ENCODE measurements at regions of chr3 and their contacts with region 1.

Region 1: GRCh38 chr3:30693470-30694120 is 87.2 kb downstream of the TGFBR2 start:
- DNase-seq: peak in 6 of 9 experiments; percentile 42 to 85 (median 61)
- ATAC-seq: peak; percentile 89
- H3K4me3 ChIP-seq: no peak overlapping the region
- H3K4me3 Mint-ChIP-seq: no peak overlapping the region
- H3K27ac ChIP-seq: peak overlapping the region in 1 of 2 experiments; percentile 4
- H3K27ac Mint-ChIP-seq: peak overlapping the region; percentile 72
- H3K4me1 ChIP-seq: peaks cover 57% of the 10 kb centered on the region
- H3K4me1 Mint-ChIP-seq: peaks cover 88% of the 10 kb centered on the region
- H3K27me3 ChIP-seq: no peaks in the 10 kb centered on the region
- H3K27me3 Mint-ChIP-seq: no peaks in the 10 kb centered on the region
- CTCF ChIP-seq: peak; percentile 87

Region 2: GRCh38 chr3:30042274-30042859 is 651.2 kb before region 1 on chr3:
- CTCF ChIA-PET with region 1: interaction called, 28 read pairs
- POLR2A ChIA-PET with region 1: no interaction called
- intact Hi-C with region 1: loop called (anchors 1 kb)
- DNase-seq: peak; percentile 10 to 74 (median 62)
- ATAC-seq: peak; percentile 40
- H3K4me3 ChIP-seq: no peak overlapping the region
- H3K4me3 Mint-ChIP-seq: no peak overlapping the region
- H3K27ac ChIP-seq: no peak overlapping the region
- H3K27ac Mint-ChIP-seq: no peak overlapping the region
- H3K4me1 ChIP-seq: no peaks in the 10 kb centered on the region
- H3K4me1 Mint-ChIP-seq: no peaks in the 10 kb centered on the region
- H3K27me3 ChIP-seq: peaks cover 0 to 2% of the 10 kb centered on the region in 2 experiments
- H3K27me3 Mint-ChIP-seq: peaks cover 27% of the 10 kb centered on the region
- CTCF ChIP-seq: peak; percentile 75

Region 3: DNA sequence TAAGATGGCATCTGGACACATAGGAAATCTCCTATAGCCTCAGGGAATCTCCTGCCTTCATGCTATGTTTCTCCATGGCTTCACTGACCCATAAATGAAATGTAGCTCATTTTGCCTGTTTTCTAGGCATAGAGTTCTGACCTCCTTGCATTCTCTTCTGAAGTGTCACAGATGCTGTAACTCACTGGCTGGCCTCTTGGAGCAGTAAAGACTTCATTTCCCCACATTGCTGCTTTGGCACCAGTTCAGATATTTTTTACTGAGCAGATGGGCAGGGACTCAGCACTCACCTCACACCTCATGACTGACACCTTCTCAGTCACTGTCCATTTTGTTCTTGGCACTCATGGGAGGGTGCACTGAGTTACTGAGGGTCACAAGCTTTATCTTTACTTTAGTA is 373.9 kb before region 1 on chr3:
- CTCF ChIA-PET with region 1: interaction called, 22 read pairs
- POLR2A ChIA-PET with region 1: interaction called, 8 read pairs
- intact Hi-C with region 1: loop called (anchors 1 to 2 kb)
- DNase-seq: peak in 8 of 9 experiments; percentile 4 to 76 (median 44)
- ATAC-seq: peak; percentile 98
- H3K4me3 ChIP-seq: no peak overlapping the region
- H3K4me3 Mint-ChIP-seq: no peak overlapping the region
- H3K27ac ChIP-seq: no peak overlapping the region
- H3K27ac Mint-ChIP-seq: peak overlapping the region; percentile 37
- H3K4me1 ChIP-seq: peaks cover 9% of the 10 kb centered on the region
- H3K4me1 Mint-ChIP-seq: peaks cover 18% of the 10 kb centered on the region
- H3K27me3 ChIP-seq: no peaks in the 10 kb centered on the region
- H3K27me3 Mint-ChIP-seq: no peaks in the 10 kb centered on the region
- CTCF ChIP-seq: peak; percentile 61

Region 4: GRCh38 chr3:30606301-30607031 is 87.1 kb before region 1 on chr3 and contains the start of gene TGFBR2:
- CTCF ChIA-PET with region 1: interaction called, 17 read pairs
- POLR2A ChIA-PET with region 1: interaction called, 6 read pairs
- intact Hi-C with region 1: loop called (anchors 2 to 5 kb)
- DNase-seq: peak; percentile 59 to 92 (median 85)
- ATAC-seq: peak; percentile 70
- H3K4me3 ChIP-seq: peak within 1 kb of the TSS; percentile 94 to 96
- H3K4me3 Mint-ChIP-seq: peak within 1 kb of the TSS; percentile 94
- H3K27ac ChIP-seq: peak within 1 kb of the TSS; percentile 83 to 94
- H3K27ac Mint-ChIP-seq: peak within 1 kb of the TSS; percentile 98
- H3K4me1 ChIP-seq: peaks cover 48% of the 10 kb centered on the region
- H3K4me1 Mint-ChIP-seq: peaks cover 59% of the 10 kb centered on the region
- H3K27me3 ChIP-seq: no peaks in the 10 kb centered on the region
- H3K27me3 Mint-ChIP-seq: no peaks in the 10 kb centered on the region
- CTCF ChIP-seq: no peak
- total RNA-seq, gene TGFBR2: 191 to 197 TPM

Region 5: DNA sequence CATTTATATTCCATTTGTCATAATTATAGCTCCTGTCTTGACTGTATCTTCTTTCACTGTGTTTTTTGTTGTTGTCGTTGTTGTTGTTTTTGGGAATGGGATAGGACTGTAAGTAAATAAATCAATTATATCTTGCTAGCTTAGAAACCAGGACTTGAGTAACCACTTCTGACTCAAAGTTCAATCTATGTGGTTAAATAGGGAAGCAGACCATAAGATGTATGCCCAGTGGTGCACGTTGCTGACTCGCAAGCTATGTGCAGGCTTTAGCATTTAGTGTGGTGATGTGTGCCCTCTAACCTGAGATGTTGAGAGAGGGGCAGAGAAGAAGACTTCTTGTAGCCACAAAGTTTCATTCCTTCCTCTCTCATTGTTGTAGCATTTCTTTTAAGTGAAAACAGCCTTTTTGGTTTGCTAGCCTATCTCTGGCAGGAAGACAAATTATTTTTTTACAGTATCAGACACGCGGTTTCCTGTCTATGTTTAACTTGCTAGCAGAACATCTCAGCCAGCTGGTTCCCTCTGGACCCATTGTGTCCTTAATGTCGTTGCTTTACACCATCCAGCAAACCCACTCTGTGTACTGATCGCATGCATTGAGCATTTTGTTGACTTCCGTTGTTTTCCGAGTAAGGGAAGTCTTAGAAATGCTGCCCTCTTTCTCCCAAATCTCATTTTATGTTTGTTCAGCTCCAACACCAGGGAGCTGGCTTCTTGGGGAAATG is 35.1 kb before region 1 on chr3:
- CTCF ChIA-PET with region 1: interaction called, 22 read pairs
- POLR2A ChIA-PET with region 1: interaction called, 12 read pairs
- intact Hi-C with region 1: loop called in 1 of 2 experiments (anchors 2 kb)
- DNase-seq: peak in 7 of 9 experiments; percentile 31 to 85 (median 70)
- ATAC-seq: peak; percentile 54
- H3K4me3 ChIP-seq: peak overlapping the region in 1 of 2 experiments; percentile 3
- H3K4me3 Mint-ChIP-seq: peak overlapping the region; percentile 70
- H3K27ac ChIP-seq: peak overlapping the region; percentile 78 to 83
- H3K27ac Mint-ChIP-seq: peak overlapping the region; percentile 98
- H3K4me1 ChIP-seq: peaks cover 99% of the 10 kb centered on the region
- H3K4me1 Mint-ChIP-seq: peaks cover 99% of the 10 kb centered on the region
- H3K27me3 ChIP-seq: no peaks in the 10 kb centered on the region
- H3K27me3 Mint-ChIP-seq: no peaks in the 10 kb centered on the region
- CTCF ChIP-seq: no peak

Region 6: DNA sequence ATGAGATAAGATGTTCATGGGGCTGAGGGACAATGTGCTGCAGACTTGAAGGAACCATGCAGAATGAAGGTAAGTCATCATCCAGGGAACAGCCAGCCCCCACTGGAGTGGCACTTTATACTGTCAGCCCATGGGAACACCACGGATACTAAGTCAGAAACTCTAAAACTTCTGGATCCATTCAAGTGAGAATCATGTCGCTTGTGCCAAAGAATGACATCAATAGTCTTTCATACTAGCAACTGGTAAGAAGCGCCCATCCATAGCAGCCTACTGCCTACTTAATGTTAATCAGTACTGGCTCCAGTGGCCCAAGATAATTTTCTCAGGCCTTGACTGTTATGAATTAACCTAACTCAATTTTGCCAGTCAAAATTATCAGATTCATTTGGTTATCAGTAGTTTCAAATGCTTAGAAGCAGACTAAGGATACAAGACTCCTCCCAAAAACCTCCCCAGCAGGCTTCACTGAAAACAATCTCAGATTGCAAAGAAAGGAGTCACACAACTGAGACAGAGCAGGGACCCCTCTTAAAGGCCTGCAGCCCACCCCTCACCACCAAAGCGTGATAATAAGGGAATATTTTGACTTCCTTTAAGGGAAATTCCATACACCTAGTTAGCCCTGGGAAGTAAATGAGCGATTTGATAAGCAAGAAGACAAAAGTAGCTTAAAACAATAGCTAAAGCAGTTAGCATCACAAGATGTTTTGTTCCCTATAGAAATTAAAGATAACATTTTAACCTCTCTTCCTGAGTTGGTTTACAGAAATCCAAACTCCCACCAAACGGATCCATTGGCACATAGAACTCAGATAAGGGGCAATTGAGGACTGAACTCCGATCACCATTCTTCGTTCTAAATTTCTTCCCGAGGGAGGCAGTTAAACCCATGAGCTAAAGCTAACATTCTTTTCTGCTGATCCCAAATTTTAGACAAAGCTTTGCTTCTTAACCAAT is 11.6 kb after region 1 on chr3:
- CTCF ChIA-PET with region 1: interaction called, 23 read pairs
- POLR2A ChIA-PET with region 1: interaction called, 3 read pairs
- intact Hi-C with region 1: no loop called
- DNase-seq: no peak
- ATAC-seq: no peak
- H3K4me3 ChIP-seq: no peak overlapping the region
- H3K4me3 Mint-ChIP-seq: no peak overlapping the region
- H3K27ac ChIP-seq: no peak overlapping the region
- H3K27ac Mint-ChIP-seq: peak overlapping the region; percentile 43
- H3K4me1 ChIP-seq: peaks cover 20% of the 10 kb centered on the region
- H3K4me1 Mint-ChIP-seq: peaks cover 50% of the 10 kb centered on the region
- H3K27me3 ChIP-seq: no peaks in the 10 kb centered on the region
- H3K27me3 Mint-ChIP-seq: no peaks in the 10 kb centered on the region
- CTCF ChIP-seq: no peak

Region 7: DNA sequence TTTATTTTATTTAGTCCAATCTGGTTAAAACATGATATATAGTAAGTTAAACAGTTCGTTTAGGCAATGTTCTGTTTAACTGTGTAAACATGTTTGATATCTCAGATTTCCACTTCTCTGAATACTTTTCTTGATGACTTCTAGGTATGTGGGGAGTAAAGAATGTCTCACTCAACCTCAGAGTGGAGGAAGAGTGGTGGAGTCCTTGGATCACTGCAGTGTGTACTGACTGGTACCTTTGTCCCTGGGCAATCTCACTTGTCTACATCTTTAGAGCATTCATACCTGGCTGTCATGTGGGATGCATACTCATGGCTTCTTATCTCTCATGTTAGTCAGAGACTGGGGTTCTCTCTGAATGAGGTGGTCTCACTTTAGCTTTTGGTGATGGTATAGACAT is 185.3 kb after region 1 on chr3:
- CTCF ChIA-PET with region 1: no interaction called
- POLR2A ChIA-PET with region 1: no interaction called
- intact Hi-C with region 1: no loop called
- DNase-seq: no peak
- ATAC-seq: no peak
- H3K4me3 ChIP-seq: no peak overlapping the region
- H3K4me3 Mint-ChIP-seq: no peak overlapping the region
- H3K27ac ChIP-seq: no peak overlapping the region
- H3K27ac Mint-ChIP-seq: no peak overlapping the region
- H3K4me1 ChIP-seq: no peaks in the 10 kb centered on the region
- H3K4me1 Mint-ChIP-seq: no peaks in the 10 kb centered on the region
- H3K27me3 ChIP-seq: no peaks in the 10 kb centered on the region
- H3K27me3 Mint-ChIP-seq: peaks cover under 1% of the 10 kb centered on the region
- CTCF ChIP-seq: no peak

Measured in CD8-positive, alpha-beta T cell (primary cell).